Psoas muscle (tissue), 8 donors: ENCODE measurements at regions of chr22 and their contacts with region 1.

Region 1: DNA sequence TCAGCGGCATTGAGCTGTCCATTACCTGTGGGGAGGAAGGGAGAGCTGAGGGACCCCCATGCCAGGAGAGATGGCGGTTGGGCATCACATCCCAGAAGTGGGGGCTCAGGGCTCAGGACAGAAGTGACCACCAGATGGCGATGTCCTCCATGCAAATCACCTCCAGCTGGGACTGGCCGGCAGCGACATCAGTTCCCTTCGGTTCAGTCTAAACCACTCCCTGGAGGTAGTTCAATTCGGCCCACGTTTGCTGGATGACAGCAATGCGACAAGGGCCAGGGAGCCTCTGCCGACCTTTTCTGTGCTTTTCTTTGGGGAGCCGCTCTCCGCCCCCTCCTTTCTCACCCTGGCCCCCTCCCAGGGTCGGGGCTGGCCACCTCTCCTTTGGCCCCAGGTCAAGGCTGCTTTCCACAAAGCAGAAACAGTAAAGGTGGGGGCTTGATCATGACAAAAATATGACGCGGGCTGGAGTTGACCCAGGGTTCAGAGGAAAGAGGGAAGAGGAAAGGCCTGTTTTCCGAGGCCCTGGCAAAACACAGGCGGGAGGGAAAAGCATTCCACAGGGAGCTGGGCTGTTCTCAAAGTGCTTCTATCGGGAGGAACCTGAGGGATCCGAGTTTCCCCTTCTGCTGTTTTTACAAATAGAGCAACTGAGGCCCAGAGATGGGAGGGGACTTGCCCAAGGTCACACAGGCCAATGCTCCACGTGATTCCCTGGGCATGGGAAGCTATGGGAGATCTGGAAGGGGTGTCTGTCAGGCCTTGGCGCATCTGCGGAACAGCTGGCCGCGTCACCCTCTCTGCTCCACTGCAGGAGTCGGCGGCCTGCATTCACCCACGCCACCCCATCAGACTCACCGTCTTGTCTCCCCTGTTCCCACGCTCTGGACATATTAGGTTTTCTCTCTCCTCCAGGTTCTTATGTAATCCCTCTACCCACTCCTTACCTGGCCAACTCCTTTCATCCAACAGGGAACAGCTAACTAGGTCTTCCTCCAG is 54.7 kb downstream of the FBXO7 start:
- DNase-seq: peak; percentile 85 to 90
- ATAC-seq: peak; percentile 72 to 84 (median 76)
- H3K4me3 ChIP-seq: peak overlapping the region; percentile 22
- H3K27ac ChIP-seq: peak overlapping the region; percentile 58
- H3K4me1 ChIP-seq: peaks cover 18% of the 10 kb centered on the region
- H3K27me3 ChIP-seq: peaks cover 0 to 8% (median 0%) of the 10 kb centered on the region in 3 donors
- CTCF ChIP-seq: peak; percentile 84

Region 2: GRCh38 chr22:32375678-32376450 is 153.4 kb before region 1 on chr22:
- intact Hi-C with region 1: no loop called
- DNase-seq: no peak
- ATAC-seq: no peak
- H3K4me3 ChIP-seq: no peak overlapping the region
- H3K27ac ChIP-seq: no peak overlapping the region
- H3K4me1 ChIP-seq: no peaks in the 10 kb centered on the region
- H3K27me3 ChIP-seq: no peaks in the 10 kb centered on the region
- CTCF ChIP-seq: no peak

Region 3: GRCh38 chr22:32474635-32475467 is 54.4 kb before region 1 on chr22 and contains the start of gene FBXO7:
- intact Hi-C with region 1: no loop called
- DNase-seq: peak; percentile 96 to 97
- ATAC-seq: peak; percentile 93 to 96 (median 96)
- H3K4me3 ChIP-seq: peak within 1 kb of the TSS; percentile 97
- H3K27ac ChIP-seq: peak within 1 kb of the TSS; percentile 99
- H3K4me1 ChIP-seq: peaks cover 30% of the 10 kb centered on the region
- H3K27me3 ChIP-seq: no peaks in the 10 kb centered on the region
- CTCF ChIP-seq: peak; percentile 13
- total RNA-seq, gene FBXO7: 28.2 to 34.4 (median 28.6) TPM

Region 4: GRCh38 chr22:32584650-32585049 is 55.4 kb after region 1 on chr22:
- intact Hi-C with region 1: no loop called
- DNase-seq: no peak
- ATAC-seq: peak in 2 of 4 donors; percentile 22 to 38
- H3K4me3 ChIP-seq: no peak overlapping the region
- H3K27ac ChIP-seq: no peak overlapping the region
- H3K4me1 ChIP-seq: no peaks in the 10 kb centered on the region
- H3K27me3 ChIP-seq: no peaks in the 10 kb centered on the region
- CTCF ChIP-seq: no peak

Region 5: DNA sequence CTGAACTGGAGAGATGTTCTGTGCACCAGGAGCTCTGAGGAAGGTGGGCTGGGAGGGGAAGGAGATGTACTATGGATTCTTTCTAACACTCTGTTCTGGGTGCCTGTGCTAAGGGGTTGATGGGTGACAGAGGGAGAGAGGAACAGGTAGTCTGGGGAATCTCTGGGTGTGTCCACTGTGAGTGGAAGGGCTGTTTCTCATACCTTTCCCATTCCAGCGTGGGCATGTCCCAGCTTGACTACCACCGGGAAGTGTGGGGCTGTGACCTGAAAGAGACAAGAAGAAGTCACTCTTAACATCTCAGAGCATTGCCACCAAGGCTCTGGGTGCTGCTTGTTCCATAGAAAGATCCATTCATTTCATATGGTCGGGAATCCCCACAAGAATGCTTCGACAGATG is 67.2 kb after region 1 on chr22:
- intact Hi-C with region 1: no loop called
- DNase-seq: no peak
- ATAC-seq: no peak
- H3K4me3 ChIP-seq: no peak overlapping the region
- H3K27ac ChIP-seq: no peak overlapping the region
- H3K4me1 ChIP-seq: no peaks in the 10 kb centered on the region
- H3K27me3 ChIP-seq: no peaks in the 10 kb centered on the region
- CTCF ChIP-seq: no peak

Region 6: GRCh38 chr22:32622004-32622743 is 92.9 kb after region 1 on chr22:
- intact Hi-C with region 1: loop called (anchors 5 to 10 kb)
- DNase-seq: peak; percentile 40 to 78
- ATAC-seq: peak in 3 of 4 donors; percentile 33 to 62 (median 46)
- H3K4me3 ChIP-seq: no peak overlapping the region
- H3K27ac ChIP-seq: peak overlapping the region; percentile 69
- H3K4me1 ChIP-seq: no peaks in the 10 kb centered on the region
- H3K27me3 ChIP-seq: peaks cover 0 to 1% (median 0%) of the 10 kb centered on the region in 3 donors
- CTCF ChIP-seq: no peak

Region 7: DNA sequence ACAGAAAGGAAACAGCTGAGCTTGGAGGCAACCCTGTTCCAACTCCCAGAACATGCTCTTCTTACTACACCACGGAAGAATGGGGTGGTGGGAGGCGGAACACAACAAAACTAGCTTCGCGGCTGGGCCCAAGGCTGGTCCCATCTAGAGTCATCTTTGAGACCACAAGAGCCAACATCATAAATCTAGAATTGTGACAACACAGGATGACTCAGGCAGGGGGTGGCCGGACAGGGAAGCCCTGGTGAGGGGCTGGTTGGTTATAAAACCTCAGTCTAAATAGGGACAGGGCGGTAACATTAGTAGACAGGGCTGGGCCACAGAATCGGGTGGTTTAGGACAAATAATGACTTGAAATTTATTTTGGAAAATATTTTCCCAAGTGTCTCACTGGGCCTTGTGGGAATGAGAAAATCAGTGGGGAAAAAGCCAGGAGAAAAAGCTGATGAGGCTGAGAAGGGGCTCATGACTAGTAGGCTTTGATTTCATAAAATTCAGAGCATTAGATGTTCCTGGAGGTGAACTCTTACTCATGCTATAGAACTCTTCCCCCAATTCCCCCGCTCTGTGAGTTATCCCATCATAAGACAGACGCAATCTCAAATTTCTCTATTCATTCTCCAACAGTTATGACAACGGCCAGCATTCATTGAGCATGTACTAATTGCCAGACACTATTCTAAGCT is 120.4 kb after region 1 on chr22:
- intact Hi-C with region 1: loop called in 1 of 2 experiments (anchors 10 kb)
- DNase-seq: peak; percentile 35 to 80
- ATAC-seq: peak in 3 of 4 donors; percentile 50 to 74 (median 71)
- H3K4me3 ChIP-seq: no peak overlapping the region
- H3K27ac ChIP-seq: no peak overlapping the region
- H3K4me1 ChIP-seq: no peaks in the 10 kb centered on the region
- H3K27me3 ChIP-seq: no peaks in the 10 kb centered on the region
- CTCF ChIP-seq: no peak

Region 8: GRCh38 chr22:32796865-32797573 is 267.7 kb after region 1 on chr22:
- intact Hi-C with region 1: loop called (anchors 2 kb)
- DNase-seq: peak; percentile 70 to 78
- ATAC-seq: peak; percentile 40 to 63 (median 60)
- H3K4me3 ChIP-seq: no peak overlapping the region
- H3K27ac ChIP-seq: no peak overlapping the region
- H3K4me1 ChIP-seq: no peaks in the 10 kb centered on the region
- H3K27me3 ChIP-seq: peaks cover 0 to 30% (median 1%) of the 10 kb centered on the region in 3 donors
- CTCF ChIP-seq: peak; percentile 53

Region 9: GRCh38 chr22:32985899-32986765 is 456.8 kb after region 1 on chr22:
- intact Hi-C with region 1: loop called (anchors 2 to 5 kb)
- DNase-seq: peak in 1 of 2 donors; percentile 30
- ATAC-seq: peak; percentile 82 to 97 (median 94)
- H3K4me3 ChIP-seq: no peak overlapping the region
- H3K27ac ChIP-seq: no peak overlapping the region
- H3K4me1 ChIP-seq: no peaks in the 10 kb centered on the region
- H3K27me3 ChIP-seq: peaks cover 0 to 6% (median 0%) of the 10 kb centered on the region in 3 donors
- CTCF ChIP-seq: peak; percentile 85

Region 10: DNA sequence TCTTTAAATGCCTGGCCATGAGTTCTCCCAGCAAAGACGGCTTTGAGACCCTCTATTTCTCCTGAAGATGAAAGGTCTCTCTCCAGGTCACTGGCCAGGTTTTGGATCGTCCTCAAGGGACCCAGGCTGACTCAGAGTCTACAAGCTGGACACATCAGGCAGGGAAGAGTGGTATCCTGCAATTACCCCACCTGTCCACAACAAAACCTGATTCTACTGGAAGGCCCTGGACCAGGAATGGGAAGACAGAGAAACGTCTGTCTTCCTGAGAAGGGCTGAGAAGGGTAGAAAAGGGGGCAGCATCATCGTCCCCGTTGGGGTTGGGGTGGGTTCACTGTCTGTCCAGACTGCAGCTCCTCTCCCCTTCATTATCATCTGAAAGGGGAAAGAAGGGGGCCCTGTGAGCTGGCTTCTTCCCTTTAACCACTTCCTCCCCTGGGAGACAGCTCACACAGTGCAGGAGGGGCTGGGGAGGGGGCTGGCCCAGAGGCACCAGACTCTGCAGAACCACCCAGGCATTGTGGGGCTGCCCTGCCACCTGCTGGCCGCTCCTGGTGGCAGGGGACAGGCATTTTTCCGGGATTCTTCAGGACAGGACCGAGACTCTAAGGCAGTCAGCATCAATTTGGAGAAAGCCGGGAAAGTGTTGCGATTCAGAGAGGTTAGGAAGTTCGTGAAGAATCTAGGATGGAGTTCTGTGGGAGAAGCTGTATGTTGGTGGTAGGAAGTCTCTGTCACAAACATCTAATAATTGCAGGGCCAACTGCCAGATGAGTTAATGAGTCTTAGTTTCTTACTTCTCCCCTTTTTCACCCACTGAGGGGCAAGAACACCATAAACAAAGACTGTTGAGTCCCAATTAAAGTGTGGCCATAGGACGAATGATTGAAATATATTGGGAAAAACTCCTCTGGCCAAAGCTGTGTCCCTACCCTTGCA is 471.3 kb after region 1 on chr22:
- intact Hi-C with region 1: loop called in 1 of 2 experiments (anchors 5 kb)
- DNase-seq: peak; percentile 71 to 77
- ATAC-seq: peak; percentile 49 to 73 (median 64)
- H3K4me3 ChIP-seq: no peak overlapping the region
- H3K27ac ChIP-seq: no peak overlapping the region
- H3K4me1 ChIP-seq: no peaks in the 10 kb centered on the region
- H3K27me3 ChIP-seq: peaks cover 0 to 18% (median 2%) of the 10 kb centered on the region in 3 donors
- CTCF ChIP-seq: peak; percentile 76